ENCODE measurements at regions of chr14 and their contacts with region 1.

Region 1: GRCh38 chr14:24299255-24300195 is at the starts of genes DHRS1 and NOP9:
- DNase-seq: peak; percentile 65
- ATAC-seq: peak; percentile 79
- H3K4me3 ChIP-seq: peak within 1 kb of the TSS; percentile 96
- H3K27ac ChIP-seq: peak within 1 kb of the TSS; percentile 51
- H3K4me1 ChIP-seq: peaks cover 25% of the 10 kb centered on the region
- H3K27me3 ChIP-seq: no peaks in the 10 kb centered on the region
- CTCF ChIP-seq: no peak
- EP300 ChIP-seq: no peak
- POLR2A ChIP-seq: peak; percentile 85
- RAD21 ChIP-seq: no peak
- polyA plus RNA-seq, gene DHRS1: 44.6 to 45.0 TPM
- polyA plus RNA-seq, gene NOP9: 2.4 to 3.4 TPM

Region 2: GRCh38 chr14:24058260-24058950 is 241.1 kb before region 1 on chr14:
- CTCF ChIA-PET with region 1: interaction called, 6 read pairs
- POLR2A ChIA-PET with region 1: interaction called, 3 read pairs
- RAD21 ChIA-PET with region 1: interaction called, 10 read pairs
- SMC1A ChIA-PET with region 1: interaction called, 6 read pairs
- in situ Hi-C with region 1: no loop called
- intact Hi-C with region 1: no loop called
- DNase-seq: no peak
- ATAC-seq: peak; percentile 86
- H3K4me3 ChIP-seq: no peak overlapping the region
- H3K27ac ChIP-seq: no peak overlapping the region
- H3K4me1 ChIP-seq: no peaks in the 10 kb centered on the region
- H3K27me3 ChIP-seq: no peaks in the 10 kb centered on the region; a peak in 1 of 4 replicates
- CTCF ChIP-seq: peak; percentile 66 to 85 (median 80)
- EP300 ChIP-seq: no peak
- POLR2A ChIP-seq: no peak
- RAD21 ChIP-seq: peak; percentile 94

Region 3: DNA sequence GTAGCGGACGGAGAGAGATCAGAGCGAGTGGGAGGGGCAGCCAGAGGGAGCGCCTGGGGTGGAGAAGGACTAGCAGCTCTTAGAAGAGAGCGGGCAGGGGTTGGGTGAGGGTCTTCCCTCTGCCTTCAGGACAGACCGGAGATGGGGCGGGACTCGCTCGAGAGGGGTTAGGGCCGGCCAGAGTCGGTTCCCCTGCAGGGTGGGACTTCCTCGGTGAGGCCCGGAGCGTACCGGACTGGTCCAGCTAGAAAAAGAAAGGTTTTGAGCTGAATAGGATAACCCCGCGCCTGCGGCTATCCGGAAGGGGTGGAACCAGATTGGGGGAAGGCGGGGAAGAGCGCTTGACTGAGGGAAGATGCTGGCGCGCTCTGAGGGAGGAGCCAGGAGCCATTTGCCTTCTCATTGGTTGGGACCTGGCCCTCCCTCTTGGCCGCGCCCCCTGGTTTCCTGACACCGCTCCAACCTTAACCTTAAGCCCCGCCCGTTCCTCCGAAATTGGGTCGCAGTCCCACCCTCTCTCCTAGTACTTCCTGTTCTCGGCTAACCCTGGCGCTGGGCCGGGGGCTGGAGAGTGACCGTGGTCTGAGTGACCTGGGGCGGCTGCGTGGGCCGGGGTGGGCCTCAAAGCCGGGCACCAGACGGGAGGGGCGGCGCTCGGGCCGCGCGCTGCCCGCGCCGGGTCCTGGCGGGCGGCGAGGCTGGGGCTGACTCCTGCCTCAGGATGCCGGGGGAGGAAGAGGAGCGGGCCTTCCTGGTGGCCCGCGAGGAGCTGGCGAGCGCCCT is 152.4 kb before region 1 on chr14 and contains the start of gene RNF31:
- CTCF ChIA-PET with region 1: interaction called, 5 read pairs
- POLR2A ChIA-PET with region 1: interaction called, 3 read pairs
- RAD21 ChIA-PET with region 1: no interaction called
- SMC1A ChIA-PET with region 1: no interaction called
- in situ Hi-C with region 1: no loop called
- intact Hi-C with region 1: loop called (anchors 5 kb)
- DNase-seq: peak; percentile 92
- ATAC-seq: peak; percentile 93
- H3K4me3 ChIP-seq: peak within 1 kb of the TSS; percentile 82
- H3K27ac ChIP-seq: peak within 1 kb of the TSS; percentile 94
- H3K4me1 ChIP-seq: peaks cover 11% of the 10 kb centered on the region
- H3K27me3 ChIP-seq: no peaks in the 10 kb centered on the region
- CTCF ChIP-seq: no peak
- EP300 ChIP-seq: no peak
- POLR2A ChIP-seq: peak; percentile 28
- RAD21 ChIP-seq: no peak
- polyA plus RNA-seq, gene RNF31: 8.5 to 19.0 TPM

Region 4: DNA sequence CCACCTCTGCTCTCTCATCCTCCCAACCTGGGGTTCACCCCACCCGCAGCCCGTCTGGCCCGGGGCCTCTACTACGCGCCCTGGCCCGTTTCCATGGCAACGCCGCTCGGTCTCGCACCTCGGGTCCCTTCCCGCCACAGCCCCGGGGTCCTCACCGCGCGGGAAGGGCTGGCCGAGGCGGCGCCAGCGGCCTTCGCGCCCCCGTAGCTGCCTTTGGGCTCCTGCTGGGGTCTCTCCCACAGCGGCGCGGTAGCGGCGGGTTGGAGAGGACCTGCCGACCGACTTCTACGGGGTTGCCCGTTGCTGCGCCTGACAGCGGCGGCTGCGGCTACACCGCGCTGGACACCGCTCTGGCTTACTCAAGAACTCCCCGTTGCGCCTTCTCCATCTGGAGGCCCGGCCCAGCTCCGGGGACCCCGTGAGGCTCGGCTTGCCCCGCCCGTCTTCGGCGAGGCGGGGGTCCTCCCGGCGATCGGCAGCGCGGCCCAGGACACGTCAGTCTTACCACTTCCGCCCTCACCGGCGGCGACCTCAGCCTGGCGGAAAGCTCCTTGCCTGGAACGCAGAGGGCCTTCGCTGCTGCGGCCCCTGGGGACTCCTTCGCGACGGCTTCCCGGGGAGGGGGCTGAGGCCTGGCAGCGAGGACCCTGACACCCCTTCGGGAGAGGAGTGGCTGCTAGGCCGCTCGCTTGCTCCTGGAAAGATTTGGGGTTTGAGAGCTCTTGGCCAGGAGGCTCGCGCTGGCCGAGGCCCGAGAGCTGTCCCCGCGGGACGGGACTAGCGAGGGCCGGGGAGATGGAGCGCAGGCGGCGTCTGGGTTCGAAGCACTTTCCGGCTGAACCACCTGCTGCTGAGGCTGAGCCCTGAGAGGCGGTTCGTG is 104.1 kb before region 1 on chr14 and contains the start of gene TM9SF1:
- CTCF ChIA-PET with region 1: interaction called, 11 read pairs
- POLR2A ChIA-PET with region 1: interaction called, 6 read pairs
- RAD21 ChIA-PET with region 1: interaction called, 3 read pairs
- SMC1A ChIA-PET with region 1: interaction called, 8 read pairs
- in situ Hi-C with region 1: no loop called
- intact Hi-C with region 1: no loop called
- DNase-seq: peak; percentile 52
- ATAC-seq: peak; percentile 93
- H3K4me3 ChIP-seq: peak within 1 kb of the TSS; percentile 68
- H3K27ac ChIP-seq: peak within 1 kb of the TSS; percentile 96
- H3K4me1 ChIP-seq: peaks cover 15% of the 10 kb centered on the region
- H3K27me3 ChIP-seq: no peaks in the 10 kb centered on the region
- CTCF ChIP-seq: no peak
- EP300 ChIP-seq: no peak
- POLR2A ChIP-seq: peak; percentile 95
- RAD21 ChIP-seq: no peak
- polyA plus RNA-seq, gene TM9SF1: 7.2 to 9.8 TPM

Region 5: GRCh38 chr14:24251880-24252288 is 47.6 kb before region 1 on chr14:
- CTCF ChIA-PET with region 1: interaction called, 368 read pairs
- POLR2A ChIA-PET with region 1: interaction called, 118 read pairs
- RAD21 ChIA-PET with region 1: interaction called, 231 read pairs
- SMC1A ChIA-PET with region 1: interaction called, 201 read pairs
- in situ Hi-C with region 1: no loop called
- intact Hi-C with region 1: no loop called
- DNase-seq: no peak
- ATAC-seq: no peak
- H3K4me3 ChIP-seq: no peak overlapping the region
- H3K27ac ChIP-seq: no peak overlapping the region
- H3K4me1 ChIP-seq: peaks cover 32% of the 10 kb centered on the region
- H3K27me3 ChIP-seq: no peaks in the 10 kb centered on the region
- CTCF ChIP-seq: no peak
- EP300 ChIP-seq: no peak
- POLR2A ChIP-seq: no peak
- RAD21 ChIP-seq: no peak

Region 6: DNA sequence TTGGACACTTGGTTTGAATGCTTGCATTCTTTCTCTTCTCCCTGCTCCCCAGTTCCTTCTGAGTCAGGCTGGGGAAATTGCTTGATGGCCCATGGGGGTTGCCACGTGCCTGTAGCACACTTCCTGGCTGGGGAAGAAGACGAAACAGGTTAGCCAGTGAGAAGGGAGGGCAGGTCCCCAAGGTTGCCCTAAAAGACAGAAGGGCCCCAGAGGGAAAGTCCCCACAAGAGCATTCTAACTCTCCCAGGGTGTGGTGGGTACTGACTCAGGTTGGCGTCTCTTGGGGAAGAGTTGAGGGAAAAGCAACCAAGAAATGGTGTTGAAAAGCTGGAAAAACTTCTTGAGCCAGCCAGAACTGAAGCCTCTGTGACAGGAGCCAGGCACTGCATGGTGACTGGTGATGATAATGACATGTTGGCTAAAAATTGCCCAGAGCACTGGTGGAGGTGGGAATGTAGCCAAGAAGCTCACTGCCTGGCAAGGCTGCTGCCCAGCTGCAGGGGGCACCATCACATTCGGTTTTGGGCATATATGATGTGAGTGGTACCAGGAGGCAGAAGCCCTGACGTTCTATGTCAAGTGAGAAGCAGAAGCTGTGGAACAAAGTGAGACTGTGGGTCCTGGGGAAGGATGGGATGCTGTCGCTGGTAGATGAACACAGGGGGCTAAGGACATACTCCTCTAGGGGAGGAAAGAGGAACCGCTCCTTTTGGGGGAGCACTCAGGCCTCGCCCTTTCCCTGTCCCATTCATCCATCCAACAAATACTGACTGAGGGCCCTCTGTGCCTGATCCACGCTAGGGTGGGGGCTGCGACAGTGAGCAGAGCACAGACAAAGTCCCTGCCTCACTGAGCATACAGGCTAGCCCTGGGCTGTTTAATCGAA is 20.0 kb before region 1 on chr14:
- CTCF ChIA-PET with region 1: interaction called, 269 read pairs
- POLR2A ChIA-PET with region 1: interaction called, 11 read pairs
- RAD21 ChIA-PET with region 1: interaction called, 34 read pairs
- SMC1A ChIA-PET with region 1: interaction called, 115 read pairs
- in situ Hi-C with region 1: no loop called
- intact Hi-C with region 1: loop called (anchors 1 kb)
- DNase-seq: peak; percentile 64
- ATAC-seq: peak; percentile 88
- H3K4me3 ChIP-seq: no peak overlapping the region; the same call in 1 of the 2 replicates
- H3K27ac ChIP-seq: peak overlapping the region; percentile 53
- H3K4me1 ChIP-seq: peaks cover 43% of the 10 kb centered on the region
- H3K27me3 ChIP-seq: no peaks in the 10 kb centered on the region
- CTCF ChIP-seq: peak; percentile 44 to 47 (median 44); a peak in 5 of 6 replicates
- EP300 ChIP-seq: 0 out of 4 replicates have a peak, but pooled peaks of 1 of the 2 experiments have one; percentile 4
- POLR2A ChIP-seq: no peak
- RAD21 ChIP-seq: 0 out of 2 replicates have a peak, but pooled peaks have one; percentile 29

Measured in GM12878 (cell line).